ENCODE measurements at regions of chr6 and their contacts with region 1.

Region 1: GRCh38 chr6:44074439-44075136 is 52.7 kb downstream of the MRPL14 start:
- DNase-seq: peak; percentile 85
- CTCF ChIP-seq: peak; percentile 97

Region 2: DNA sequence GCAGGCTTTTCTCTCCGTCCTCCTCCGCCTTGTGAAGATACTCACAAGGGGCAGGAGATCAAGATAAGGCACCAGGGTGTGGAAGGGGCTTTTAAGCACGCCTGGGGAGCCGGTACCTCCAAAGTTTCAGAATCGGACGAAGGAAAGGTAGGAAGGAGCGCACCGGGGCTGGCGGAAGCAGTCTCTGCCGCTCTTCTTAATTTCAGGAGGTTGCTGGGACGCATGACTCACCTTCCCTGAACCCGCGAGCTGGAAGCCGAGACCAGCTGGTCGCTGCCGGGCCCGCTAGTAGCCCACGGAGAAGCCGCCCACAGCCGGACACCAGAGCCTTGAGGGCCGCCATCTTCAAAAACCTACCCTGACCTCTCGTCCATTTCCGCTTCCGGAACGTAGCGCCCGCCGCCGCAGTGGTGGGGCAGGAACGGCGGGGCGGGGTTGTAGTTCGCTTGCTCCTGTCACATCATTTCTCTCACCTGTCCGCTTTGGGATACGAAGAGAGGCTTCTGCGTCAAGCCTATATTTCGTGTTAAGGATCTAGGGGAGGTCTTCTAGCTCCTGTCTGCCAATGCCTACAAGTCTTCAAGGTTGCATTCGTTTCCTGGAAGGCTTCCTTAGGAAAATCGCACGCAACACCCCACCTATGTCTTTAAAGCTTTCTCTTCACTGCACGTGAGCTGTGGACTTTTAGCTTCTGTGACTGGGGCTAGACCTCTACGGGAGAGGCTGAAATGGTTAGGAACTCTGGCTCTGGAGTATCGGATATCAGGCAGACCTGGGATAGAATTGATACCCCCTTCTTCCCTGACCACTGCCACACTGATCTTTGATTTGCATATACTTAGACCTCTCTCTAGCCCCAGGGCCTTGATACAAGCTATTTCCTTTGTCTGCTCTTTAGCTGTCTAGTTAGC is 386.9 kb before region 1 on chr6 and contains the start of gene MRPS18A:
- CTCF ChIA-PET with region 1: interaction called, 12 read pairs
- POLR2A ChIA-PET with region 1: no interaction called
- DNase-seq: peak; percentile 90
- CTCF ChIP-seq: no peak

Region 3: GRCh38 chr6:43758617-43759050 is 316.0 kb before region 1 on chr6:
- CTCF ChIA-PET with region 1: interaction called, 38 read pairs
- POLR2A ChIA-PET with region 1: no interaction called
- DNase-seq: peak; percentile 68
- CTCF ChIP-seq: peak; percentile 77

Region 4: DNA sequence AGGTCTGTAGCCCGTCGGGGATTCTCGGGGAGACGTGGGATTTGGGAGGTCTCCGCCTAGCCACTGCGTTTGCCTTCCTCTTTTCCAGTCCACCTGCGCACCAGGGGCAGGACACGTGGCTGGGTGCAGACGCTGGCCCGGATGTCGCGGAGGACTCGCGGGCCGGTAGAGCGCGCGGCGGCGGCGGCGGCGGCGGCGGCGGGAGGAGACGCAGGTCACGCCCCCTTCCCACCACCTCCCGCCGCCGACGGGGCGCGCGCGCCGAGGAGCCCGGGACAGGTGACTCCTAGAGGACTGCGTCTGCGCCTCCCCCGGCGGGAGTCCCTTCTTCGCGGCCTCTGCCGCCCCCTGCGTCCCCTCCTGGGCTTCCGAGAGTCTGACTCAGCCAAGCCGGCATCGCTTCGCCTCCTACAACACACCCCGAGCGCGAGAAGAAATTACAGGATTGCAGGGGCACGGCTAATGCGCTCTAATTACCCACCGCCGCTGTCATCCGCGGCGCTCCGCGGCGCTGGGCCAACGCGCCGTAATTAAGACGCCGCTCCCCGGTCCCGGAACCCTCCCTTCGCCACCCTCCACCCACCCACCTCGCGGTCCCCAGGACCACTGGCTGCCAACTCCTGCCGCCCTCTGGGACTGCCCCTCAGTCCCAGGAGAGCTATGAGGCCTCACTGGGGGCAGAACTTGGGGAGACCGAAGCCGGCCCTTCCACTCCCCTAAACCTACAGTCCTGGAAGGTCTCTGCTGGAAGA is 71.8 kb before region 1 on chr6:
- CTCF ChIA-PET with region 1: interaction called, 10 read pairs
- POLR2A ChIA-PET with region 1: no interaction called
- DNase-seq: peak; percentile 81
- CTCF ChIP-seq: peak; percentile 19

Region 5: DNA sequence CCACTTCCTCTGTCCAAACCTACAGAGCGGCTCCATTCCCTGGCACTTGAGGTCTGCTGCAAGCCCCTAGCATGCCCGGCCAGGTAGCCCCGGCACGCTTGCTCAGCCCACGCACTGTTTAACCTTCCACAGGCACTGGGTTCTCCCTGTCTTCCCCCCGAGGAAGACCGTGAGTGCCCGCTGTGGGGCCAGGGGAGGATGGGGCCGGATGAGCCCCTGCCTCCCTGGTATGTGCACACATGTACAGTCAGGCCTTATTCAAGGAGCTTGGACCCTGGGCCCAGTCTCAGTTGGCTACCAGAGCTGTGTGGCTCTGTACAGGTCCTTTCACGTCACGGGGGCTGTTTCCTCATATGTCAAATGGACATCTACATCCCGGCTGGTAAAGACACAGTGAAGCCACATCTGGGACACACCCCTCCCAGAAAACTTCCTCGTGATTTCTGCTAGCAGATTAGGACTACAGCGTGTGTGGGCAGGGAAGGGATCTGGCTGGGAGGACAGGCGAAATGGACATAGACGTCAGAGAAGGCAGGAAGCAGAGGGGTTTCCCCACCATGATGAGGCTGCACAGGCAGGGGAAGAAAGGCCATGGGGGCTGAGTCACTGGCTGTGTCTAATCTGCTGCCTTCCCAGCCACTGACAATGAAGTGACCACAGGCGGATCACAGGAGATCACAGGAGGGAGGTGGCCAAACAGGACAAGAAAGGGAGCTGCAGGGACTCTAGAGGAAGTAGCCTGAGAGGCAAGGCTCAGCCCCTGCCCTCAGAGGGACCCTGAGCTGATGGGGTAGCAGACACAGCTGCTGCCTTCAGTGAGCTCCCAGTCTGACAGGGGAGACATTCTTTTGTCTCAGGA is 10.3 kb before region 1 on chr6:
- CTCF ChIA-PET with region 1: interaction called, 57 read pairs
- POLR2A ChIA-PET with region 1: no interaction called
- DNase-seq: peak; percentile 62
- CTCF ChIP-seq: no peak

Region 6: GRCh38 chr6:44111434-44112417 is 37.1 kb after region 1 on chr6:
- CTCF ChIA-PET with region 1: interaction called, 10 read pairs
- POLR2A ChIA-PET with region 1: no interaction called
- DNase-seq: no peak
- CTCF ChIP-seq: no peak

Region 7: DNA sequence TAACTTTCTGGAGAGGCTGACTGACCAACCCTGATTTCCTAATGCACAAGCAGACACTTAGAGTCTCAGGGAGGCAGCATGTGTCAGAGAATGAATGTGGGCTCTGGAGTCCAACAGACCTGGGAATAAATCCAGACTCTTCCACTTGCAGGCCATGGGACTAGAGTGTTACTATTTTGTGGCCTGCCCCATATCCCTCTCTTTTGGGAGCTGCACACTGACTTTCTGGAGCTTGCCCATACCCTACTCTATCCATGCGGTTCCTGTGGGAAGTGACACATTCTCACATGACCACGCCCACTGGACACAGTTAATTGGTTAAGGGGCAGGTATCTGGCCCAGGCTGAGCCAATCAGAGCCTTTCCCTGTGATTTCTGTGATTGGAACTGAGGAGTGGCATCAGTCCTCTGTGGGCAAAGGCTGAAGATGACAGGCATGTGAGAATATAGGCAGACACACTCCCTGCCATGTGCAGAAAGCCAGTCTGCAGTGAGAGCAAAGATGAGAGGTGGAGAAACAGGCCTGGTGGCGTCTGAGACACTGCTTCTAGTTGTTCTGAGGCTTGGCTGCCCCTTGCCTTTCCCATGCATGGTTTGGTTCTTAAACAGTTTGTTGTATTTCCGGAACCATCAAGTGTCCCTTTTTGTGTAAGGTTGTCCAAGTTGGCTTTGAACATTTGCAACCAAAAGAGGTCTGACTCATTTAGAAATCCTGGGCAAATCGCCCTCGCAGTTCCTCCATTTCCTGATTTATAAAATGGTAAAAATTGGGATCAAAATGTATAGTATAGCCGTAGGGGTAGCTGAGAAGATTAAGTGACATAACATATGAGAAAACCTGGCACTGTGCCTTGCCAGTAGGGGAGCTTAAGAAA is 438.5 kb after region 1 on chr6:
- CTCF ChIA-PET with region 1: no interaction called
- POLR2A ChIA-PET with region 1: no interaction called
- DNase-seq: no peak
- CTCF ChIP-seq: no peak

Measured in GM10248 (cell line).